ENCODE measurements at regions of chr15 and their contacts with region 1.

Region 1: DNA sequence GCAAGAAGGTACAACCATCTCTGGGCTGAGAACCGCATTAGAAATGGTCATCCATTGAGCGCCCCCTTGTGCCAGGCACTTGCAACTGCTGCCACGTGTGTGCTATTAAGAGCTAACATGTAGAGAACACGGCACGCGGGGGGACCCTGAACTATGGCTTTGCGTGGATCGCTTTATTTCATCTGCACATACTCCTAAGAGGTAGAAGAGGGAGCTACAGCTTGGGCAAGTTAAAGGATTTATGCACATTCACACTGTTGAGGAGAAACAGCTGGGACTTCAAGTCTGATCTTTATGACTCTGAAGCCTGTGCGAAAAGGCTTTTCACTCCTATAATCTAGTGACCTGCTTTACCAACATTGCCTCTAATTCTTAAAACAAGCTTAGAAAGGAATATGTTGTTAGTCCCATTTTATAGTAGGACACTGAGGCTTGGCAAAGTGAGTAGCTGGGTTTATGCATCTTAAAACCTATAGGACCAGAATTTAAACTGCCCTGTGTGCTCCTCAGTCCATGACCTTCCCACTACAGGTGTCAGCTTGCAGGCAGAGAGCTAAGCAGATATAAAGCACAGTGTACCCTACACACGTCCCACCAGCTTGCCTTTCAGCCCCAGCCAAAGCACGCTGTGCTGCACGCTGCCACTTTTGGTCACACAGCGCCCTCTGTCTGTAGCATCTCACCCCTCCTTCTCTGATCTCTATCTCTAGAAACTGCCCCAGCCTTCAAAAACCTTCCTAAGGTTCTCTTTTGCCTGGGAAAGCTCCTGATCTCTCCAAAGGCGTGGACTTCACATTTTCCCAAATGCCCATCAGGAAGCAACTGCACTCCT is 57.8 kb downstream of the STARD5 start:
- DNase-seq: peak; percentile 71 to 75 (median 73)
- H3K4me3 ChIP-seq: peak overlapping the region in 1 of 2 donors; percentile 9
- H3K4me3 Mint-ChIP-seq: peak overlapping the region; percentile 66 to 90 (median 79)
- H3K27ac ChIP-seq: no peak overlapping the region
- H3K27ac Mint-ChIP-seq: peak overlapping the region in 5 of 7 donors; percentile 11 to 65 (median 32)
- H3K4me1 ChIP-seq: peaks cover 12% of the 10 kb centered on the region
- H3K4me1 Mint-ChIP-seq: peaks cover 12 to 16% (median 14%) of the 10 kb centered on the region in 4 donors
- H3K27me3 ChIP-seq: no peaks in the 10 kb centered on the region
- H3K27me3 Mint-ChIP-seq: peaks cover 1 to 4% of the 10 kb centered on the region in 2 donors

Region 2: GRCh38 chr15:80940851-80941250 is 325.3 kb before region 1 on chr15:
- CTCF ChIA-PET with region 1: interaction called, 10 read pairs
- POLR2A ChIA-PET with region 1: no interaction called
- intact Hi-C with region 1: no loop called
- DNase-seq: no peak
- H3K4me3 ChIP-seq: no peak overlapping the region
- H3K4me3 Mint-ChIP-seq: no peak overlapping the region
- H3K27ac ChIP-seq: no peak overlapping the region
- H3K27ac Mint-ChIP-seq: no peak overlapping the region
- H3K4me1 ChIP-seq: no peaks in the 10 kb centered on the region
- H3K4me1 Mint-ChIP-seq: no peaks in the 10 kb centered on the region
- H3K27me3 ChIP-seq: no peaks in the 10 kb centered on the region
- H3K27me3 Mint-ChIP-seq: no peaks in the 10 kb centered on the region

Region 3: DNA sequence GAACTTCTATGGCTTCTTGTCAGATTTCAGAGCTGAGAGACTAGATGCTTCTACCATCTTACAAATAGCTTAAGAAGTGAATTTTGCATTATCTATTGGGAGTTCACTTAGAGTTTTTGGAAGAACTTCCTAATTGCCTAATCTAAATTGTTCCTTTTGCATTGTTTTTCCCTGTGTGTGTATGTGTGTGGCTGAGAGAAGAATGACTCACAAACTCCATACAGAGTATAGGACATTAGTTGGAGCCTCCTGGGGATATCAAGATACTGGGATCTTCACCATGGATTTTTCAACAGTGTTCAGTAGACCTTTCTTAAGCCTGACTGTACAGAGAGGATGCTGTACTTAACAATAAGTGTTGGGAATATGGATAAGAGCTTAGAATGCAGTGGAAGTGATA is 254.6 kb before region 1 on chr15:
- CTCF ChIA-PET with region 1: interaction called, 11 read pairs
- POLR2A ChIA-PET with region 1: no interaction called
- intact Hi-C with region 1: no loop called
- DNase-seq: no peak
- H3K4me3 ChIP-seq: no peak overlapping the region
- H3K4me3 Mint-ChIP-seq: no peak overlapping the region
- H3K27ac ChIP-seq: no peak overlapping the region
- H3K27ac Mint-ChIP-seq: no peak overlapping the region
- H3K4me1 ChIP-seq: peaks cover 12% of the 10 kb centered on the region
- H3K4me1 Mint-ChIP-seq: peaks cover 20 to 46% (median 34%) of the 10 kb centered on the region in 4 donors
- H3K27me3 ChIP-seq: no peaks in the 10 kb centered on the region
- H3K27me3 Mint-ChIP-seq: no peaks in the 10 kb centered on the region

Region 4: GRCh38 chr15:81286621-81287121 is 20.5 kb after region 1 on chr15:
- CTCF ChIA-PET with region 1: interaction called, 59 read pairs
- POLR2A ChIA-PET with region 1: interaction called, 3 read pairs
- intact Hi-C with region 1: no loop called
- DNase-seq: peak; percentile 57 to 62 (median 60)
- H3K4me3 ChIP-seq: peak overlapping the region in 1 of 2 donors; percentile 32
- H3K4me3 Mint-ChIP-seq: peak overlapping the region; percentile 22 to 86 (median 76)
- H3K27ac ChIP-seq: peak overlapping the region; percentile 58
- H3K27ac Mint-ChIP-seq: peak overlapping the region; percentile 93 to 99 (median 97)
- H3K4me1 ChIP-seq: peaks cover 75% of the 10 kb centered on the region
- H3K4me1 Mint-ChIP-seq: peaks cover 59 to 81% (median 71%) of the 10 kb centered on the region in 4 donors
- H3K27me3 ChIP-seq: no peaks in the 10 kb centered on the region
- H3K27me3 Mint-ChIP-seq: no peaks in the 10 kb centered on the region

Region 5: GRCh38 chr15:81336568-81336967 is 70.4 kb after region 1 on chr15:
- CTCF ChIA-PET with region 1: interaction called, 142 read pairs
- POLR2A ChIA-PET with region 1: no interaction called
- intact Hi-C with region 1: no loop called
- DNase-seq: peak in 4 of 5 donors; percentile 31 to 54 (median 40)
- H3K4me3 ChIP-seq: no peak overlapping the region
- H3K4me3 Mint-ChIP-seq: peak overlapping the region in 1 of 8 donors; percentile 17
- H3K27ac ChIP-seq: no peak overlapping the region
- H3K27ac Mint-ChIP-seq: peak overlapping the region in 2 of 7 donors; percentile 28 to 77
- H3K4me1 ChIP-seq: no peaks in the 10 kb centered on the region
- H3K4me1 Mint-ChIP-seq: peaks cover 0 to 7% (median 2%) of the 10 kb centered on the region in 4 donors
- H3K27me3 ChIP-seq: no peaks in the 10 kb centered on the region
- H3K27me3 Mint-ChIP-seq: peaks cover 0 to 2% of the 10 kb centered on the region in 2 donors

Region 6: DNA sequence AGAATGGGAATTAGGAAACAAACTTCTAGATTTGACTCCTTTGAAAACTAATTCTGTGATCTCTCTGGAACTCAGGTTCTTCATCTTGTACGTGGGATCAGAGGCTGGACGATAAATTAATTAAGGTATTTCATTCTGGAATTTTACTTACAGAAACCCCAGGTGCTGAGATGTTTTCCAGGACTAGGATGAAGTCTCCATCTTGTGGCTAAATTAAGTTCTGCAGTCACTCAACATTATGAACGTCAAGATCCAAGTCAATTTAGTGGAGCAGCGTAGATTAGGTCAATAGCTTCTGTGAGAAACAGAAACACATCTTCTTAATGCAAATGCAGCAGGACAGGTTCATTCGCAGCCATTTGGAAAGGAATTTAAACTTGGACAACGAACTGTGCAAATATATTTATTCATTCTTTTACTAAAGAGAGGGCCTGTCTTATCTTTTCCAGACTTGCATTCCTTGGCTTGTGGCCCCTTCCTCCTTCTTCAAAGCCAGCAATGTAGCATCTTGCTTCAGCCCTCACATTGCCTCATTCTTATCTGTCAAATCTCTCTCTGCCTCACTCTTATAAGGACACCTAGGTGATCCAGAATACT is 134.6 kb after region 1 on chr15:
- CTCF ChIA-PET with region 1: interaction called, 147 read pairs
- POLR2A ChIA-PET with region 1: no interaction called
- intact Hi-C with region 1: no loop called
- DNase-seq: peak in 4 of 5 donors; percentile 42 to 57 (median 48)
- H3K4me3 ChIP-seq: no peak overlapping the region
- H3K4me3 Mint-ChIP-seq: no peak overlapping the region
- H3K27ac ChIP-seq: no peak overlapping the region
- H3K27ac Mint-ChIP-seq: no peak overlapping the region
- H3K4me1 ChIP-seq: no peaks in the 10 kb centered on the region
- H3K4me1 Mint-ChIP-seq: peaks cover 0 to 4% (median 3%) of the 10 kb centered on the region in 4 donors
- H3K27me3 ChIP-seq: peaks cover 5% of the 10 kb centered on the region
- H3K27me3 Mint-ChIP-seq: peaks cover 5 to 7% of the 10 kb centered on the region in 2 donors